Tibial artery (tissue), 4 donors: ENCODE measurements at regions of chr19 and their contacts with region 1.

Region 1: GRCh38 chr19:4567584-4568071 is 8.1 kb upstream of the SEMA6B start:
- DNase-seq: no peak
- H3K4me3 ChIP-seq: no peak overlapping the region
- H3K27ac ChIP-seq: no peak overlapping the region
- H3K4me1 ChIP-seq: no peaks in the 10 kb centered on the region
- H3K27me3 ChIP-seq: peaks cover 0 to 44% of the 10 kb centered on the region in 2 donors
- CTCF ChIP-seq: peak; percentile 44 to 52

Region 2: GRCh38 chr19:4624733-4625362 is 57.2 kb after region 1 on chr19:
- intact Hi-C with region 1: loop called (anchors 5 kb)
- DNase-seq: no peak
- H3K4me3 ChIP-seq: no peak overlapping the region
- H3K27ac ChIP-seq: no peak overlapping the region
- H3K4me1 ChIP-seq: no peaks in the 10 kb centered on the region
- H3K27me3 ChIP-seq: peaks cover 0 to 55% of the 10 kb centered on the region in 2 donors
- CTCF ChIP-seq: no peak

Region 3: GRCh38 chr19:4669723-4670480 is 102.3 kb after region 1 on chr19 and contains the start of gene MYDGF:
- intact Hi-C with region 1: no loop called
- DNase-seq: peak; percentile 88 to 92
- H3K4me3 ChIP-seq: peak within 1 kb of the TSS; percentile 87 to 98
- H3K27ac ChIP-seq: peak within 1 kb of the TSS; percentile 79 to 80
- H3K4me1 ChIP-seq: peaks cover 0 to 22% (median 10%) of the 10 kb centered on the region in 4 donors
- H3K27me3 ChIP-seq: no peaks in the 10 kb centered on the region
- CTCF ChIP-seq: no peak